Calu3 (cell line): ENCODE measurements at regions of chrX and their contacts with region 1.

Region 1: DNA sequence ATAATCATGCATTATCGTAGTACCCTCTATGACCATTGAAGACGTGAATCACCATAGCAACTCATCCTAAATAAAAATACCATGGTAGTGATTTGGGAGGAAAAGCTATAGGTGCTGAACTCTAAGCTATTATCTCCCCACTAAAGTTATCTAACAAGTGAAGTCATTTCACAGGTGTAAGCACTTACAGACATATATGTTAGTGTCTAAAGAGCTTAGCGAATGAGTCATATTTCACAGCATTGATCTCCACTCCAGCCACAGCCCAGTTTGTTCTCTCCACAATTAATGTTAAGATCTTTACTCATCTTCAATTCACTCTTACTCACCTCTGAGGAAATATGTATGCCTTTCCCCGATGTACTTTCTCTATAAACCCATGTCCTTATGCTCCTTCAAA is 57.0 kb downstream of the DCAF8L1 start:
- DNase-seq: no peak
- H3K4me3 Mint-ChIP-seq: no peak overlapping the region
- H3K27ac Mint-ChIP-seq: no peak overlapping the region
- H3K4me1 Mint-ChIP-seq: peaks cover 42% of the 10 kb centered on the region
- H3K27me3 Mint-ChIP-seq: no peaks in the 10 kb centered on the region
- CTCF ChIP-seq: no peak

Region 2: DNA sequence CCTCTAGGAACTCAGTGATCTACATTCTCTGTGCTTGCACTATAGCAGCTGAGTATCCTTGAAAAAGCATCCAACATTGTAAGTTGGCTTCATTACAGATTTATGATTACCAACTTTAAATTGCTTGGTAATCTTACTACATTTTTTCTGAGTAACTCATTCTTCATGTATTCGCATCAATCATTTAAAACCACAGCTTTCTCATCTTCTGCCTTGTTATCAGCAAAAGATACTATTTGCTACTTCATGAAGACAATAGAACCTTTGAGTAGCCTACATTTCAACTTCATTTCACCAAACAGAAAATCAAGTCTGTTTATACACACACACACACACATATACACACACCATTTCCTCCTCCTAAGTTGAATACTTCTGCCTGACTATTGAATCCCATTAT is 340.3 kb before region 1 on chrX:
- CTCF ChIA-PET with region 1: no interaction called
- intact Hi-C with region 1: no loop called
- DNase-seq: peak; percentile 9
- H3K4me3 Mint-ChIP-seq: no peak overlapping the region
- H3K27ac Mint-ChIP-seq: peak overlapping the region; percentile 48
- H3K4me1 Mint-ChIP-seq: peaks cover 41% of the 10 kb centered on the region
- H3K27me3 Mint-ChIP-seq: no peaks in the 10 kb centered on the region
- CTCF ChIP-seq: no peak

Region 3: GRCh38 chrX:28108186-28108945 is 184.1 kb after region 1 on chrX:
- CTCF ChIA-PET with region 1: no interaction called
- intact Hi-C with region 1: loop called (anchors 10 kb)
- DNase-seq: no peak
- H3K4me3 Mint-ChIP-seq: no peak overlapping the region
- H3K27ac Mint-ChIP-seq: peak overlapping the region; percentile 78
- H3K4me1 Mint-ChIP-seq: peaks cover 11% of the 10 kb centered on the region
- H3K27me3 Mint-ChIP-seq: no peaks in the 10 kb centered on the region
- CTCF ChIP-seq: no peak